Right cardiac atrium (tissue), 5 donors: ENCODE measurements at regions of chr2 and their contacts with region 1.

Region 1: GRCh38 chr2:144516981-144517865 is 2.7 kb downstream of the ZEB2 start:
- DNase-seq: peak; percentile 71 to 87 (median 83)
- ATAC-seq: peak; percentile 23 to 66
- H3K4me3 ChIP-seq: peak overlapping the region; percentile 98
- H3K27ac ChIP-seq: peak overlapping the region; percentile 100
- H3K4me1 ChIP-seq: no peaks in the 10 kb centered on the region
- H3K27me3 ChIP-seq: no peaks in the 10 kb centered on the region

Region 2: DNA sequence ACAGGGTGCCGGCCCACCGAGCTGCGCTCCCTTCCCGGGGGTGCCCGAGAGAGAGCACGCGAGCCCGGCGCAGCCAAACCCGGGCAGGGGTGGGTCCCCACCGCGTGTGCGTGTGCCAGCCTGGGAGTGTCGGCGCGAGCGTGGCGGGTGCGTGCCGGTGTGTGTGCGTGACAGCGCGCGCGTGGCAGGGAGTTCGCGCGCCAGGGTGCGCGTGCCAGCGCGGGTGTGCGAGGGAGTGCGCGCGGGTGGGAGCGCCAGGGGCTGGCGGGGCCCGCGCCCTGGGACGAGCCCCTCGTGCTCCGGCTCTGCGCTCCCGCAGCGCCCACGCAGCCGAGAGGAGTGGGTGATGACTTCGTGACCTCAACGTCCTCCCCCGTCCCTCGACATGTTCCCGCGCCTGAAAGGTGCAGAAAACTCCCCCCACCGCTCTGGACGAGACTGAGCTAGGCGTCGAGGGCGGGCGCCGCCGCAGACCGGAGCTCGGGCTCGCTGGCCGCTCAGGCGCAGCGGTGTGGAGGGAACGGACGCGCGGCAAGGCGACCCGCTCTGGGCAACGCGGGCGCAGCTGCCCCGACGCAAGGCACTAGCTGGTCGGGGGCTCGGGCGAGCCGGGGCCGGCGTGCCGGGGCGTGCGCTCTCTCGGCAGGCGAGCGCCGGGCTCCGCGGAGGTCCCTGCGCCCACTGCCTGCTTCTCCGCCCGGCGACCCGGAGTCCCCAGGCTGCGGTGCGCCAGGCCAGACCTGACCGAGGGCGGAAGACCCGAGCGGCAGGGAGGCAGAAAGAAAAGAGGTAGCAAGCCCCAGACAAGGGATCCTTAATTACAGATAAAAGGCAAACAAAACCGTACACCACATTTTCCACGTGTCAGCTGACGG is 580.1 kb before region 1 on chr2:
- intact Hi-C with region 1: loop called in 1 of 4 experiments (anchors 5 kb)
- DNase-seq: peak; percentile 57 to 79 (median 77)
- ATAC-seq: peak; percentile 77 to 80
- H3K4me3 ChIP-seq: peak overlapping the region; percentile 53
- H3K27ac ChIP-seq: peak overlapping the region; percentile 55
- H3K4me1 ChIP-seq: no peaks in the 10 kb centered on the region
- H3K27me3 ChIP-seq: no peaks in the 10 kb centered on the region

Region 3: GRCh38 chr2:144332356-144333142 is 184.7 kb before region 1 on chr2:
- intact Hi-C with region 1: loop called in 3 of 4 experiments (anchors 5 to 10 kb)
- DNase-seq: peak; percentile 87 to 96 (median 95)
- ATAC-seq: peak; percentile 95 to 96
- H3K4me3 ChIP-seq: peak overlapping the region; percentile 84
- H3K27ac ChIP-seq: peak overlapping the region; percentile 88
- H3K4me1 ChIP-seq: no peaks in the 10 kb centered on the region
- H3K27me3 ChIP-seq: no peaks in the 10 kb centered on the region

Region 4: DNA sequence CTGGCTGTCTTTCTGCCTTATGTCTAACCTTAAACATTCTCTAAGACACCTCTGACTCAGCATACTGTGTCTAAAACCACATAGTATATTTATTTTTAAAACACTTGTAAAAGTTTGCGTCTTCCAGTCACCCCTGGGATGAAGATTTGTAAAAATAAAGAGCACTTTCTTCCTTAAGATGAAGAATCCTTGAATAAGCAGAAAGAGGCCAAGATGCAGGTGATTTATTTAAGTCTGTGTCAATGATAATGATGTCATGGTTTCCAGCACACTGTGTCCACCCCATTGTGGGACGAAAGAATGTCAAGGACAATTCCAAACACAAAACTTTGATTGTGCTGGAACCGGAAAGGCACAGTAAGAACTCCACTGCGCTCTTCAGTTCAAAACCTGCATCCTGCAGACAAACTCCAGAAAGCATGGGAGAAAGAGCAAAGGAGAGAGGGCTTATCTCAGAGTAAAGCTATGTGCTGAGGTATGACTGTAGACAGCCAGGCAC is 90.2 kb before region 1 on chr2:
- intact Hi-C with region 1: loop called in 1 of 4 experiments (anchors 10 kb)
- DNase-seq: no peak
- ATAC-seq: peak; percentile 72 to 85
- H3K4me3 ChIP-seq: no peak overlapping the region
- H3K27ac ChIP-seq: peak overlapping the region; percentile 62
- H3K4me1 ChIP-seq: peaks cover 3% of the 10 kb centered on the region
- H3K27me3 ChIP-seq: no peaks in the 10 kb centered on the region

Region 5: GRCh38 chr2:144456680-144457079 is 60.5 kb before region 1 on chr2:
- intact Hi-C with region 1: loop called in 3 of 4 experiments (anchors 10 kb)
- DNase-seq: peak in 1 of 3 donors; percentile 32
- ATAC-seq: peak; percentile 77 to 79
- H3K4me3 ChIP-seq: no peak overlapping the region
- H3K27ac ChIP-seq: peak overlapping the region; percentile 30
- H3K4me1 ChIP-seq: peaks cover 13% of the 10 kb centered on the region
- H3K27me3 ChIP-seq: no peaks in the 10 kb centered on the region

Region 6: GRCh38 chr2:144886862-144887261 is 369.6 kb after region 1 on chr2:
- intact Hi-C with region 1: loop called in 1 of 4 experiments (anchors 10 kb)
- DNase-seq: peak; percentile 70 to 89 (median 84)
- ATAC-seq: peak; percentile 90 to 98
- H3K4me3 ChIP-seq: no peak overlapping the region
- H3K27ac ChIP-seq: no peak overlapping the region
- H3K4me1 ChIP-seq: peaks cover 2% of the 10 kb centered on the region
- H3K27me3 ChIP-seq: no peaks in the 10 kb centered on the region

Region 7: DNA sequence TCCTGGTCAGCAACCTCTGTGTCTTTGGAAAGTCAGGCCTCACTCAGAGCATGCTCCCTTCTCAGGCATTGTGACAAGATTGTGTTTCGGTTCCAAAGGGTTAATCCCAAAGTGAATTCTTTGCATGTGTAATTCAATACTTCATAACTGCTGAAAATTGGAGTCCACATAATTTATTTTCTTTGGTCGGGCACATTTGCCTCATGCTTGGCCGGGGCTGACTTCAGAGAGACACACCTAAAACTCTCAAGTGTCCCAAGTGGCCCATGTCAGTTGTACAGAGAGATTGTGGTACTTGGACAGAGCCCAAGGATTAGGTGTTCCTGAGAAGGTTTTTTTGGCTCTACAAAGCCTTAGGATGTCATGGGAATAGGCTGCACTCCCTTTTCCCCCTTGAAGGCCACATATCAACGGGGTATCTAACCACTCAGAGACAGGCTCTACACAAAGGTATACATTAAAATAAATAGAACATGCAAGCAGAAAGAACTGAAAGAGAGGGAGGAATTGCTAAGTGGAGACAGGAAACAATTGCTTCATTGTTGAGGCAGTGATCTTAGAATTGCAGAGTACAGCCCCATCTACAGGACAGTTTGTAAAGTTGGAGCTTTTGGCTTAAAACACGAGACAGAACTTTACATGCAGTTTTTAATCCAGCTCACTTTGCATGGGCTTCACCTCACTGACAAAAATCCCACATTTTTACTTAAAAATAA is 1235.0 kb after region 1 on chr2:
- intact Hi-C with region 1: loop called in 3 of 4 experiments (anchors 5 to 10 kb)
- DNase-seq: peak in 2 of 3 donors; percentile 38 to 76
- ATAC-seq: peak; percentile 83 to 94
- H3K4me3 ChIP-seq: peak overlapping the region; percentile 9
- H3K27ac ChIP-seq: peak overlapping the region; percentile 83
- H3K4me1 ChIP-seq: peaks cover 11% of the 10 kb centered on the region
- H3K27me3 ChIP-seq: no peaks in the 10 kb centered on the region